Activated CD4-positive, alpha-beta memory T cell treated with anti-CD3 and anti-CD28 coated beads, Interleukin-2, amount 10 ng/mL, durations not matched to agents 7 days and 5 days (primary cell): ENCODE measurements at regions of chr5 and their contacts with region 1.

Region 1: GRCh38 chr5:95646554-95647431 is at the start of gene RFESD:
- DNase-seq: peak; percentile 98
- H3K4me3 Mint-ChIP-seq: peak within 1 kb of the TSS; percentile 79
- H3K27ac Mint-ChIP-seq: peak within 1 kb of the TSS; percentile 88
- H3K4me1 Mint-ChIP-seq: peaks cover 45% of the 10 kb centered on the region
- H3K27me3 Mint-ChIP-seq: no peaks in the 10 kb centered on the region
- total RNA-seq, gene RFESD: 5.4 to 6.4 TPM

Region 2: DNA sequence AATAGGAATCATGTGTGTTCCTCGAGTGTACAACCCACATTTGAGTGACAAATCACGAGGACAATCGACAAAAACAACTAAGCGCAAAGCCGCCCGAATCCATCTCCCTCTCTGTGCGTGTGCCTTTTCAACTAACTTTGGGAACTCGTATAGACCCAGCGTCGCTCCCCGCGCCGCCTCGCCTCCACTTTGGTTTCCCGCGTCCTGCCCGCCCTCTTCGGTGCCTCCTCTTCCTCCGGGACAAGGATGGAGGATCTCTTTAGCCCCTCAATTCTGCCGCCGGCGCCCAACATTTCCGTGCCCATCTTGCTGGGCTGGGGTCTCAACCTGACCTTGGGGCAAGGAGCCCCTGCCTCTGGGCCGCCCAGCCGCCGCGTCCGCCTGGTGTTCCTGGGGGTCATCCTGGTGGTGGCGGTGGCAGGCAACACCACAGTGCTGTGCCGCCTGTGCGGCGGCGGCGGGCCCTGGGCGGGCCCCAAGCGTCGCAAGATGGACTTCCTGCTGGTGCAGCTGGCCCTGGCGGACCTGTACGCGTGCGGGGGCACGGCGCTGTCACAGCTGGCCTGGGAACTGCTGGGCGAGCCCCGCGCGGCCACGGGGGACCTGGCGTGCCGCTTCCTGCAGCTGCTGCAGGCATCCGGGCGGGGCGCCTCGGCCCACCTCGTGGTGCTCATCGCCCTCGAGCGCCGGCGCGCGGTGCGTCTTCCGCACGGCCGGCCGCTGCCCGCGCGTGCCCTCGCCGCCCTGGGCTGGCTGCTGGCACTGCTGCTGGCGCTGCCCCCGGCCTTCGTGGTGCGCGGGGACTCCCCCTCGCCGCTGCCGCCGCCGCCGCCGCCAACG is 26.5 kb before region 1 on chr5 and contains the start of gene GPR150:
- CTCF ChIA-PET with region 1: interaction called, 17 read pairs
- POLR2A ChIA-PET with region 1: interaction called, 52 read pairs
- DNase-seq: peak; percentile 72
- H3K4me3 Mint-ChIP-seq: peak within 1 kb of the TSS; percentile 77
- H3K27ac Mint-ChIP-seq: peak within 1 kb of the TSS; percentile 31
- H3K4me1 Mint-ChIP-seq: peaks cover 45% of the 10 kb centered on the region
- H3K27me3 Mint-ChIP-seq: peaks cover 3% of the 10 kb centered on the region
- total RNA-seq, gene GPR150: 1.7 TPM

Region 3: GRCh38 chr5:95664204-95664786 is 17.5 kb after region 1 on chr5:
- CTCF ChIA-PET with region 1: interaction called, 19 read pairs
- POLR2A ChIA-PET with region 1: interaction called, 3 read pairs
- DNase-seq: peak; percentile 23
- H3K4me3 Mint-ChIP-seq: no peak overlapping the region
- H3K27ac Mint-ChIP-seq: no peak overlapping the region
- H3K4me1 Mint-ChIP-seq: no peaks in the 10 kb centered on the region
- H3K27me3 Mint-ChIP-seq: peaks cover 3% of the 10 kb centered on the region

Region 4: DNA sequence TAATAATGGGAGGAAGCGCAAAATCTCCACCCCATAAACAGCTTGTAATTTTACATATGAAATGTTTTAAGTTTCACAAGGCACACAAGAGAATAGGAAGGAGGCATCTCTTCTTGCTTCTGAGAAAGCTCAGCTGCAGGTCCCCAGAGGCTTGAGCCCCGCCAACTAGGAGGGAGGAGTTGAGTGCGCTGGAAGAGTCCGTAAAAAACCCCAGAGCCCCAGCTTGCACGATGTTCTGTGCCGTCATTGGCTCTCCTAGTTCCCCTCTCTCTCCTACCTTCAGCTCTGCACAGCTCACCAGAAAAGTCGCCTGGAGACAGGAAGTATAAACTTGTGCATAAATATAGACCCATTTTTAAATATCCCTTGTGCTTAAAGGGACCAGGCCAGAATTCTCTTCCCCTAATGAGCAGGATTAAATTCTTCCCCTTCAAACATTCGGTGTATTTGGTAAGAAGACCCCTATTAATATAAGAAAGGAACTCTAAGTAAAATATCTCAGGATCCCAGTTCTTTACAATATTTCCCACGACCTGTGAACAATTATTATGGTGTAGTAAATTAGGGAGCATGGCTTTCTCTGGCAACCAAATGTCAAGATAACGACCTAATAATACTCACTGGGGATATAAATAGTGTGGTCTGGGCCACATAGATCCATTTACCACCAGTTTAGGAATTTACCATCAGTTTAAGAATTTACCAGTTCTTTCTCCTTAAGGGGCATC is 162.1 kb after region 1 on chr5:
- CTCF ChIA-PET with region 1: interaction called, 4 read pairs
- POLR2A ChIA-PET with region 1: interaction called, 15 read pairs
- DNase-seq: peak; percentile 81
- H3K4me3 Mint-ChIP-seq: peak overlapping the region; percentile 50
- H3K27ac Mint-ChIP-seq: peak overlapping the region; percentile 78
- H3K4me1 Mint-ChIP-seq: peaks cover 60% of the 10 kb centered on the region
- H3K27me3 Mint-ChIP-seq: no peaks in the 10 kb centered on the region

Region 5: GRCh38 chr5:95835682-95836385 is 189.0 kb after region 1 on chr5:
- CTCF ChIA-PET with region 1: interaction called, 6 read pairs
- POLR2A ChIA-PET with region 1: interaction called, 29 read pairs
- DNase-seq: no peak
- H3K4me3 Mint-ChIP-seq: peak overlapping the region; percentile 83
- H3K27ac Mint-ChIP-seq: peak overlapping the region; percentile 89
- H3K4me1 Mint-ChIP-seq: peaks cover 44% of the 10 kb centered on the region
- H3K27me3 Mint-ChIP-seq: no peaks in the 10 kb centered on the region